HepG2 (cell line): ENCODE measurements at regions of chr11 and their contacts with region 1.

Region 1: DNA sequence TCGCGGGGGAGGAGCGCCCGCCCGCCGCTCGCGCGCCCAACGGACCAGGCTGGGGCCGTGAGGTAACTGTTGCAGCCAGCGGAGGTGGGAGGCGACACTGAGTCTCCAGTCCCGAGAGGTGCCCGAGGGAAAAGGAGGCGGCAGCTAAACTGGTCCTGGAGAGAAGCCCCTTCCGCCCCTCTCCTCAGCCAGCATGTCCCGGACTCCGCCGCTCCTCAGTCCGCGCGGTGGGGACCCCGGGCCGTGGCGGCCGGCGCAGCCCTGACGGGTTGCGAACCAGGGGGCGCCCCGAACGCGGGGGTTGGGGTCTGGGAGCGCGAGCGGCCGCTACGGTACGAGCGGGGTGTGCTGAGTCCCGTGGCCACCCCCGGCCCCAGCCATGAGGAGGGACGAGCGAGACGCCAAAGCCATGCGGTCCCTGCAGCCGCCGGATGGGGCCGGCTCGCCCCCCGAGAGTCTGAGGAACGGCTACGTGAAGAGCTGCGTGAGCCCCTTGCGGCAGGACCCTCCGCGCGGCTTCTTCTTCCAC is at the start of gene PDE3B:
- DNase-seq: peak; percentile 83
- ATAC-seq: peak; percentile 91
- H3K4me3 ChIP-seq: peak within 1 kb of the TSS; percentile 96 to 100 (median 99)
- H3K27ac ChIP-seq: peak within 1 kb of the TSS; percentile 92
- H3K4me1 ChIP-seq: peaks cover 51% of the 10 kb centered on the region
- H3K27me3 ChIP-seq: no peaks in the 10 kb centered on the region; a peak in 1 of 5 replicates
- CTCF ChIP-seq: peak; percentile 59
- EP300 ChIP-seq: no peak
- POLR2A ChIP-seq: peak; percentile 86 to 93
- RAD21 ChIP-seq: peak; percentile 56
- total RNA-seq, gene PDE3B: 19.6 and 26.5 TPM in 2 replicates

Region 2: DNA sequence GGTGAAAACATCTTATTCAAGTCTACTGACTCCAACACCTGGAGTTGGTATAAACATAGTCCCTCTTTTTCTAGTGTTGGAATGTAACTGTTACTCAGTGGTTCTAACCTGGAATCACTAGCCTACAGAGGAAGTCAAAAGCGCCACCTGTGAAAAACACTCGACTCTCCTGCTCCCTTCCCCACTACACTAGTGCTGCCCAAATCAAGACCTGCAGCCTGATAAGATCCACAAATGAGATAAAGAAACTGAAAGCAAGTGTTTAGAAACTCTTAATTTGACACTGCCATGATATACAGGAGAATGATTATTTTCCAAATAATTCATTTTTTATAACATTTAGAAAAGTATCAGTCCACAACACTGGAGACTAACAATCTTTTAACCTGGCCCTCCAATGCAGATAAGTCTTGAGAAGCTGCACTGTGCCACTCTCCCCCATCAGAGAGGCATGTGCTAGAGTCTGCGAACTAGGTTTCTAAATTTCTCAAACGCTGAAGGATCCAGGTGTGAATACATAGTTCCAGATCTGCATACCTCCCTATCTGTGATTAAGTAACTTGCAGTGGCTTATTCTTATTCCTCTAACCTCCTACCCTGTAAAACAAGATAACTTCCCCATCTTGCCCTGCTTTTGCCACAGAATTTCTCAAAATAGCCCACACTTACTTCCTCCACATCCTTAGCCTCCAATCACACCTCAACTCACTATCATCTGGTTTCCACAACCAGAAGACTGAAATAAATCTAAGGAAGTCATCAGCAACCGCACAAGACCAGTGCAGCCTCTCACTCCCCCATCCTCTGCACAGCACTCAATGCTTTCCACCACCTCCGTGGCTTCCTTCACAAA is 372.8 kb before region 1 on chr11:
- CTCF ChIA-PET with region 1: no interaction called
- POLR2A ChIA-PET with region 1: no interaction called
- in situ Hi-C with region 1: no loop called
- intact Hi-C with region 1: no loop called
- DNase-seq: no peak
- ATAC-seq: no peak; the same call in 2 of the 3 replicates
- H3K4me3 ChIP-seq: no peak overlapping the region
- H3K27ac ChIP-seq: no peak overlapping the region
- H3K4me1 ChIP-seq: 0 out of 2 replicates have a peak, but pooled peaks cover 5% of the 10 kb centered on the region
- H3K27me3 ChIP-seq: no peaks in the 10 kb centered on the region; a peak in 1 of 5 replicates
- CTCF ChIP-seq: no peak
- EP300 ChIP-seq: no peak
- POLR2A ChIP-seq: no peak
- RAD21 ChIP-seq: no peak

Region 3: DNA sequence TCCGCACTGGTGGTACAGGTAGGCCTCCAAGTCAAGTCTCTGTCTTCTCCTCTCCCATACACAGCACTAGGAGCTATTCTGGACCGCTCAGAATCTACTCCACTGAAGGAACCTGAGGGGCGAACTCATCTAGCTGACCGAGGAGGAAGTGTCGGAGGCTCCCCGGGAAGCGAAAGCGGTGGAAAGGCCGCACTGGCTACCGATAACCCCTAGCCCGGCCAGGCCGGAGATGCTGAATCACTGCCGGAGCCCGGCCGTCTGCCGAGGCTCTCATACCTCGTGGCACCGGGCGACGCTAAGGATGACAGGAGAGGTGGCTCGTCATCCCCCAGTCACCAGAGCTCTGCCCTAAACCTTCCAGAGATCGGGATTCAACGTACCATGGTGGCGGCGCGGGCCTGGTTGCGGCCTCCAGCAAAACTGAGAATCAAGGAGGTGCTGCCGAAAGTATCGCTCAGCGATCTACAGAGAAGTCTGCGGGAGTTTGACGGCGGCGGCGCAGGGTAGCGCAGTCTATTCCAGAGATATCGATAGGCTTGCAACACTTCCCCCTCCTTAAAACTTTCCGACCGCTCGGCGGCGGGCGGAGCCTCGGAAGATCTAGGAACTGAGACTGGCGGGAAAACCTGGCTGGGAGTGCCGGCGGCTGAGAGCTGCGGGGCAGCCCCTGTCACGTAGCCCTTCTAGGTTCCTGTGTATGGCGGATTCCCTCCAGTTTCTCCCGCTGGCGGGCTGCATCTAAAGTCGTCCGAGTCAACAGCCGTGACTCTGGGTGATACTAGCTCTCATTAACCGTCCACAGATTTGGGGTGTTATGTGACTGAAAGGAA is 123.6 kb before region 1 on chr11 and contains the start of gene PSMA1:
- CTCF ChIA-PET with region 1: no interaction called
- POLR2A ChIA-PET with region 1: interaction called, 7 read pairs
- in situ Hi-C with region 1: loop called (anchors 25 kb)
- intact Hi-C with region 1: loop called (anchors 1 kb)
- DNase-seq: peak; percentile 94
- ATAC-seq: peak; percentile 95
- H3K4me3 ChIP-seq: peak within 1 kb of the TSS; percentile 75 to 89 (median 87)
- H3K27ac ChIP-seq: peak within 1 kb of the TSS; percentile 90
- H3K4me1 ChIP-seq: peaks cover 16% of the 10 kb centered on the region
- H3K27me3 ChIP-seq: no peaks in the 10 kb centered on the region; a peak in 1 of 5 replicates
- CTCF ChIP-seq: peak; percentile 37
- EP300 ChIP-seq: peak; percentile 23 to 61; a peak in 1 of 4 replicates
- POLR2A ChIP-seq: peak; percentile 78 to 79
- RAD21 ChIP-seq: no peak; the same call in 1 of the 2 replicates
- total RNA-seq, gene PSMA1: 229 and 297 TPM in 2 replicates

Region 4: DNA sequence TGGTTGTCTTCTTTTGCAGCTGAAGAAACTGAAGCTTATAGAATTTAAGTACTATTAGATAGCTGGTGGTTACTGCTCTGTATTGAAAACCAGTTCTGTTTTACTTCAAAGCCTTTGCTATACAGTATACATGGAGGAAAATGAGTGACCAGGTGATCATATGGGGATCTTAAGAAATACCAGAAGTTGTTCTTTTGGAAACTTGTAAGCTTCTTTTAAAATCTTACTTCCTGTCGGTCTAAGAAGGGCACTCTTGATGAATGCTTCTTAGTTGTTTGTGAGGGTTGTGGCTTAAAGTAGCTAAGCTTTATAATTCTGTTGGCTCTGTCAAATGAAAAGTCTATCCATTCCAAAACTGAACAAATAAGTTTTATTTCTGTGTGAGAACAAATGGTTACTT is 55.0 kb after region 1 on chr11:
- CTCF ChIA-PET with region 1: no interaction called
- POLR2A ChIA-PET with region 1: no interaction called
- in situ Hi-C with region 1: no loop called
- intact Hi-C with region 1: no loop called
- DNase-seq: no peak
- ATAC-seq: no peak
- H3K4me3 ChIP-seq: no peak overlapping the region
- H3K27ac ChIP-seq: no peak overlapping the region
- H3K4me1 ChIP-seq: peaks cover 9% of the 10 kb centered on the region
- H3K27me3 ChIP-seq: no peaks in the 10 kb centered on the region
- CTCF ChIP-seq: no peak
- EP300 ChIP-seq: no peak
- POLR2A ChIP-seq: no peak
- RAD21 ChIP-seq: no peak

Region 5: GRCh38 chr11:14746857-14747395 is 103.2 kb after region 1 on chr11:
- CTCF ChIA-PET with region 1: no interaction called
- POLR2A ChIA-PET with region 1: no interaction called
- in situ Hi-C with region 1: no loop called
- intact Hi-C with region 1: loop called (anchors 10 kb)
- DNase-seq: no peak
- ATAC-seq: no peak
- H3K4me3 ChIP-seq: no peak overlapping the region
- H3K27ac ChIP-seq: no peak overlapping the region
- H3K4me1 ChIP-seq: peaks cover 12% of the 10 kb centered on the region
- H3K27me3 ChIP-seq: no peaks in the 10 kb centered on the region
- CTCF ChIP-seq: no peak
- EP300 ChIP-seq: no peak
- POLR2A ChIP-seq: no peak
- RAD21 ChIP-seq: no peak